ENCODE measurements at regions of chr14 and their contacts with region 1.

Region 1: GRCh38 chr14:23068476-23069412 is 11.4 kb upstream of the CDH24 start:
- DNase-seq: peak; percentile 97
- H3K4me3 ChIP-seq: no peak overlapping the region
- H3K27ac ChIP-seq: peak overlapping the region; percentile 35
- H3K4me1 ChIP-seq: peaks cover 28% of the 10 kb centered on the region
- H3K27me3 ChIP-seq: no peaks in the 10 kb centered on the region
- CTCF ChIP-seq: peak; percentile 93 to 100
- POLR2A ChIP-seq: no peak

Region 2: DNA sequence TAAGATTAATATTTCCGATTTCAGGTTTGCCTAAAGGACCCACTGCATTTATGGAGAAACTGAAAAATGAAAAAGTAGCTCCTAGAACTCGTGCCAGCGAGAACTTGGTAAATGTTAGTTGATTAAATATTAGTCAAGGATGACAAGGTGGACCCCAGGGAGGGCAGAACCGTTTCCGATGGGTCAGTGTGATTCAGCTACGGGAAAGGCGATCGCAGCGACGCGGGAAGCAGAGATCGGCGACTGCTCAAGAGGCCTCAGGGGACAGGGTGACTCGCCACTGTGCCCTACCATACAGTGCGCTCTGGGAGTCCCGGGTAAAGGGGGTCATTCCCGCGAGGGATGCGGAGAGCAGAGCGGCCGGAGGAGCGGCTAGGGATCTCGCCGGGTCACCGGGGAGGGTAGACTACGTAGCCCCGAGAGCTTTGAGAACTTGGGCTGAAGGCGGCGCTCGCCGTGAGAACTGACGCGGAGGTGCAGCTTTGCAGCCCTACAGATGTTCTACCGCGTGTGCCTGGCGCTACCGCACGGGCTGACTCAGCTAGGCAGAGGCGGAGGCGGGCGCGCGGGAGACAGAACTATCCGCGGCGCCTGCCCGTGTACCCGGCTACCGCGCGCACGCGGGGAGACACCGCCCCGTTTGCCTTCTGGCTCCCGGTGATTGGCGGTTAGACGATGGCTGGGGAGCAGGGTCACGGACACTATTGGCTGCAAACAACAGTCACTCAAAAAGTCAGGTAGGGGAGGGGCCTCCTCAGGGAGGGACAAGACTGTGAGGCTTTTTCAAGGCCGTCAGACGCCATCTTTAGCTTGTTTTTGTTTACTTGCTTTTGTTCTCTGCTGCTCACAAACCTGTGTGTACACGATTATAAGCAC is 62.0 kb before region 1 on chr14:
- CTCF ChIA-PET with region 1: interaction called, 20 read pairs
- POLR2A ChIA-PET with region 1: no interaction called
- dilution Hi-C with region 1: no loop called
- intact Hi-C with region 1: no loop called
- DNase-seq: peak; percentile 99
- H3K4me3 ChIP-seq: peak overlapping the region; percentile 38 to 78 (median 56)
- H3K27ac ChIP-seq: peak overlapping the region; percentile 89
- H3K4me1 ChIP-seq: peaks cover 29% of the 10 kb centered on the region
- H3K27me3 ChIP-seq: no peaks in the 10 kb centered on the region
- CTCF ChIP-seq: peak; percentile 7 to 34
- POLR2A ChIP-seq: peak; percentile 97

Region 3: GRCh38 chr14:23085458-23085857 is 16.7 kb after region 1 on chr14:
- CTCF ChIA-PET with region 1: interaction called, 32 read pairs
- POLR2A ChIA-PET with region 1: interaction called, 3 read pairs
- dilution Hi-C with region 1: no loop called
- intact Hi-C with region 1: no loop called
- DNase-seq: no peak
- H3K4me3 ChIP-seq: no peak overlapping the region
- H3K27ac ChIP-seq: no peak overlapping the region
- H3K4me1 ChIP-seq: peaks cover 7% of the 10 kb centered on the region
- H3K27me3 ChIP-seq: no peaks in the 10 kb centered on the region
- CTCF ChIP-seq: no peak
- POLR2A ChIP-seq: no peak

Region 4: DNA sequence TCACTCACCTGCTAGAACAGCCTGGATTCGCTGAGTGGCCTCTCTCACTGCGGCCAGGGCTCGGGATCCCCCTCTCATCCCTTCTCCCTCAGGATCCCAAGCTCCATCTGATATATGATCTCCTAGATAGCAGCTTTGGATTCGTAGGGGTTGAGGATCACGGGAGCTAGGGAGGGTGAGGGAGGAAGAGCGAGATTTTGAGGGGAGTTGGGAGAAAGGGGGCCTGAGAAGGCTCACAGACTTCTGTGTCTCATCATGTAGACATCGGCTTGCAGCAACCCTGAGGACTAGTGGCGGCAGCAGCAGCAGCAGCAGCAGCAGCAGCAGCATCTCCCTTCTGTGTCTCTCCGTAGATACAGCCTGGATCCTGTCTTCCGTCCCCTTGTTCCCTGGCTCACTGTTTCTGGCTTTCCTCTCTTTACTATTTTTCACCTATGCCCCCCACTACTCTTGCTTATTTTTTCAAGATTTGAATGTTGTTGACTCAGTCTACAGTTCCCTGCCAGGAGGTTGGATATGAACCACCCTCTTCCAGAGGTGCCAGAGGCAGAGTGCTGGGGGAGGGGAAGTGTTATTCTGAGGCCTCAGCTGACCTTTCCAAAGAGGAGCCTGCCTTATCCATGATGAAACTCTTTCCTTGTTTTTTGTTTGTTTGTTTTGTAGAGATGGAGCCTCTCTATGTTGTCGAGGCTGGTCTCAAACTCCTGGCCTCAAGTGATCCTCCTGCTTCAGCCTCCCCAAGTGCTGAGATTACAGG is 36.0 kb after region 1 on chr14 and contains the start of gene CIROP:
- CTCF ChIA-PET with region 1: interaction called, 141 read pairs
- POLR2A ChIA-PET with region 1: interaction called, 3 read pairs
- dilution Hi-C with region 1: no loop called
- intact Hi-C with region 1: loop called (anchors 1 kb)
- DNase-seq: no peak
- H3K4me3 ChIP-seq: no peak within 1 kb of the TSS
- H3K27ac ChIP-seq: no peak within 1 kb of the TSS
- H3K4me1 ChIP-seq: no peaks in the 10 kb centered on the region
- H3K27me3 ChIP-seq: no peaks in the 10 kb centered on the region
- CTCF ChIP-seq: no peak
- POLR2A ChIP-seq: no peak
- total RNA-seq, gene CIROP: not detected in 2 replicates

Region 5: GRCh38 chr14:23186913-23187654 is 118.3 kb after region 1 on chr14:
- CTCF ChIA-PET with region 1: interaction called, 41 read pairs
- POLR2A ChIA-PET with region 1: no interaction called
- dilution Hi-C with region 1: no loop called
- intact Hi-C with region 1: no loop called
- DNase-seq: peak; percentile 81
- H3K4me3 ChIP-seq: no peak overlapping the region
- H3K27ac ChIP-seq: no peak overlapping the region
- H3K4me1 ChIP-seq: peaks cover 22% of the 10 kb centered on the region
- H3K27me3 ChIP-seq: peaks cover under 1 to 5% of the 10 kb centered on the region in 2 experiments
- CTCF ChIP-seq: peak; percentile 61 to 73
- POLR2A ChIP-seq: no peak

Region 6: GRCh38 chr14:23258256-23258655 is 189.5 kb after region 1 on chr14:
- CTCF ChIA-PET with region 1: no interaction called
- POLR2A ChIA-PET with region 1: no interaction called
- dilution Hi-C with region 1: no loop called
- intact Hi-C with region 1: no loop called
- DNase-seq: no peak
- H3K4me3 ChIP-seq: no peak overlapping the region
- H3K27ac ChIP-seq: no peak overlapping the region
- H3K4me1 ChIP-seq: no peaks in the 10 kb centered on the region
- H3K27me3 ChIP-seq: peaks cover 19 to 26% of the 10 kb centered on the region in 2 experiments
- CTCF ChIP-seq: no peak
- POLR2A ChIP-seq: no peak

Measured in endothelial cell of umbilical vein (primary cell).